ENCODE measurements at regions of chr6 and their contacts with region 1.

Region 1: GRCh38 chr6:168895102-168895812 is 358.4 kb downstream of the THBS2 start:
- DNase-seq: peak; percentile 75
- H3K4me3 Mint-ChIP-seq: peak overlapping the region; percentile 35
- H3K27ac Mint-ChIP-seq: no peak overlapping the region
- H3K4me1 Mint-ChIP-seq: no peaks in the 10 kb centered on the region
- H3K27me3 Mint-ChIP-seq: peaks cover 35% of the 10 kb centered on the region
- CTCF ChIP-seq: peak; percentile 93

Region 2: GRCh38 chr6:169487579-169488436 is 592.6 kb after region 1 on chr6:
- CTCF ChIA-PET with region 1: no interaction called
- POLR2A ChIA-PET with region 1: no interaction called
- intact Hi-C with region 1: loop called (anchors 1 kb)
- DNase-seq: peak; percentile 16
- H3K4me3 Mint-ChIP-seq: no peak overlapping the region
- H3K27ac Mint-ChIP-seq: no peak overlapping the region
- H3K4me1 Mint-ChIP-seq: no peaks in the 10 kb centered on the region
- H3K27me3 Mint-ChIP-seq: no peaks in the 10 kb centered on the region
- CTCF ChIP-seq: no peak